Mammary epithelial cell (primary cell): ENCODE measurements at regions of chr15 and their contacts with region 1.

Region 1: GRCh38 chr15:87045403-87046080 is 965.9 kb downstream of the AGBL1 start:
- DNase-seq: peak; percentile 62
- H3K4me3 ChIP-seq: no peak overlapping the region
- H3K27ac ChIP-seq: no peak overlapping the region
- H3K4me1 ChIP-seq: peaks cover 7% of the 10 kb centered on the region
- H3K27me3 ChIP-seq: no peaks in the 10 kb centered on the region
- CTCF ChIP-seq: no peak

Region 2: DNA sequence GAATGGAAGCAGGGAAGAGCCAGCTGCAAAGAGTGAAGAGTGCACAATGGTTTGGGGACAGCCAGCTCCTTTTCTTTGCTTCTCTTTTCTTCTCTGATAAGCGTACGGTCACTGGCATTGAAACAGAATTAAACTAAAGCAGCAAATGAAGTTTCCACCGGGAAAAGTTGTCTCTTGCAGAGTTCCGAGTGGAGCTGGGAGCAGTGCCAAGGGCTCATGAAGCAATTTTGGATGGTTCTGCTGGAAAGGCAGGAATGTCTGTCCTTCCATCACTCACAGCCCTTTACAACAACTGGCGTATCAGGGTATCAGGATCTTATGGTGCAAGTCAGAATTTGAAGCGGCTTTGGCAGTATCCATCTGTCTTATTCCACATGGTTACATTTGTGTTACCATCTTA is 168.1 kb after region 1 on chr15:
- CTCF ChIA-PET with region 1: no interaction called
- dilution Hi-C with region 1: no loop called
- in situ Hi-C with region 1: no loop called
- intact Hi-C with region 1: loop called (anchors 5 kb)
- DNase-seq: no peak
- H3K4me3 ChIP-seq: no peak overlapping the region
- H3K27ac ChIP-seq: no peak overlapping the region
- H3K4me1 ChIP-seq: peaks cover 26% of the 10 kb centered on the region
- H3K27me3 ChIP-seq: no peaks in the 10 kb centered on the region
- CTCF ChIP-seq: no peak

Region 3: DNA sequence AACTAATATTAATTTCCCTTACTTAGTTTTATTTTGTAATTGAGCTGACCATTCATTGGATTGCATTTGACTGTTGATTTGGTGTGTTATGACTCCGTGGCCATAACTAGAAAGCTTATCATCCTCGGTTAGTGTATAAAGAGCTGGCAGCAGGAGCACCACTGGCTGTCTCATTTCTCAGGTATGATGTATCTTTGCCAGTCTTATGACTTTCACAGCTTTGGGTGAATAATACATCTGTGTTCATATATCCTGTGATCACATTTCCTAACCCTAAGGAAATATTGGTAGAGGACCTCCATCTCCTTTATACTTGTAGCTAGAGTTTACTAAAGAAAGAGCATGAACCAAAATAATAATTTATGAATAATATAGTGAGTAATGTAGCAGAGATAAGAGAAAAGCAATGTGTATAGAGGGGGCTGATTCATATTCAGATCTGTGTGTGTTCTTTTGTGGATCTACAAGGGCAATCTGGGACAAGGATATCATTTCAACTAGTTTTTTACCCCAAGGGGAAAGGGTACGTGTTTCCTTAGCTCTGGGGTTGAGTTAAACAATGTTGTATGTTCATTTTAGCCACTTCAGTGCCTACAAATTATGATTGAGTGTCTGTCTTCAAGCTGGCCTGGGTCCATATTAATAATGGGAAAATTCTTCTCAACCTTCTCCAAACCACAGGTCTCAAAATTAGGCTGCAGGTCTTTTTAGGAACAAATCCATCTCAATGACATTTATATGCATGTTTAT is 309.3 kb after region 1 on chr15:
- CTCF ChIA-PET with region 1: no interaction called
- dilution Hi-C with region 1: no loop called
- in situ Hi-C with region 1: no loop called
- intact Hi-C with region 1: loop called (anchors 1 kb)
- DNase-seq: peak; percentile 91
- H3K4me3 ChIP-seq: no peak overlapping the region
- H3K27ac ChIP-seq: peak overlapping the region; percentile 90
- H3K4me1 ChIP-seq: peaks cover 14% of the 10 kb centered on the region
- H3K27me3 ChIP-seq: no peaks in the 10 kb centered on the region
- CTCF ChIP-seq: no peak

Region 4: GRCh38 chr15:87489902-87490665 is 444.5 kb after region 1 on chr15:
- CTCF ChIA-PET with region 1: no interaction called
- dilution Hi-C with region 1: no loop called
- in situ Hi-C with region 1: no loop called
- intact Hi-C with region 1: loop called (anchors 10 kb)
- DNase-seq: no peak
- H3K4me3 ChIP-seq: no peak overlapping the region
- H3K27ac ChIP-seq: no peak overlapping the region
- H3K4me1 ChIP-seq: no peaks in the 10 kb centered on the region
- H3K27me3 ChIP-seq: no peaks in the 10 kb centered on the region
- CTCF ChIP-seq: peak in 1 of 2 donors; percentile 27

Region 5: GRCh38 chr15:88274553-88275460 is 1229.3 kb after region 1 on chr15:
- CTCF ChIA-PET with region 1: no interaction called
- dilution Hi-C with region 1: no loop called
- in situ Hi-C with region 1: no loop called
- intact Hi-C with region 1: loop called (anchors 10 kb)
- DNase-seq: peak; percentile 44
- H3K4me3 ChIP-seq: no peak overlapping the region
- H3K27ac ChIP-seq: no peak overlapping the region
- H3K4me1 ChIP-seq: no peaks in the 10 kb centered on the region
- H3K27me3 ChIP-seq: peaks cover 2% of the 10 kb centered on the region
- CTCF ChIP-seq: peak; percentile 83 to 96

Region 6: GRCh38 chr15:88454867-88455810 is 1409.6 kb after region 1 on chr15:
- CTCF ChIA-PET with region 1: no interaction called
- dilution Hi-C with region 1: no loop called
- in situ Hi-C with region 1: no loop called
- intact Hi-C with region 1: loop called (anchors 10 kb)
- DNase-seq: peak; percentile 59
- H3K4me3 ChIP-seq: no peak overlapping the region
- H3K27ac ChIP-seq: no peak overlapping the region
- H3K4me1 ChIP-seq: no peaks in the 10 kb centered on the region
- H3K27me3 ChIP-seq: no peaks in the 10 kb centered on the region
- CTCF ChIP-seq: peak; percentile 89 to 90